Aorta (tissue), 5 donors: ENCODE measurements at regions of chr15 and their contacts with region 1.

Region 1: DNA sequence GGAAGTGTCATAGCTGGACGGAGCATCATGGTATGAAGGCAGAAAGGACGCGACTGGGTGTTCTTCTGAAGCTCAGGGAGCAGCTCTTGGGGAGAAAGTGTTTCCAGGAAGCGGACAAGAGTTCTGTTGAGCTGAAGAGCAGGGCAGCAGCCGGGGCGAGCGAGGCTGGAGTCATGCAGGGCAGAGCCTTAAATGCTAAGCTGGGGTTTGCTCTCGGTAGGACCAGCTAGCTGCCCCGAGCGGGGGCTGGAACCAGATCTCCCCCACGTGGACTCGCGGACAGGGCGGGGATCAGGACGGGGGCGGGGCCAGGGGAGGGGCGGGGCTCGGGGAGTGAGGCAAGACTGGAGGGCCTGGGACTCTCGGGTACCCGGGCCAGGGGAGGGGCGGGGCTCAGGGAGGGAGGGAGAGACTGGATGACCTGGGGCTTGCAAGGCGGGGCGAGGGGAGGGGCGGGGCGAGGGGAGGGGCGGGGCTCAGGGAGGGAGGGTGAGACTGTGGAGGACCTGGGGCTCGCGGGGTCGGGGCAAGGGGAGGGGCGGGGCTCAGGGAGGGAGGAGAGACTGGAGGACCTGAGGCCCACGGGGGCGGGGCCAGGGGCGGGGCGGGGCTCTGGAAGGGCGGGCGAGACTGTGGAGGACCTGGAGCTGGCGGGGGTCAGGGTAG is 486 bp upstream of the FAH start:
- DNase-seq: peak; percentile 98
- ATAC-seq: peak; percentile 94
- H3K4me3 ChIP-seq: peak overlapping the region; percentile 58 to 74
- H3K27ac ChIP-seq: no peak overlapping the region
- H3K4me1 ChIP-seq: peaks cover 0 to 3% of the 10 kb centered on the region in 2 donors
- H3K27me3 ChIP-seq: no peaks in the 10 kb centered on the region

Region 2: GRCh38 chr15:79702621-79703020 is 449.7 kb before region 1 on chr15:
- intact Hi-C with region 1: no loop called
- DNase-seq: no peak
- ATAC-seq: no peak
- H3K4me3 ChIP-seq: no peak overlapping the region
- H3K27ac ChIP-seq: no peak overlapping the region
- H3K4me1 ChIP-seq: no peaks in the 10 kb centered on the region
- H3K27me3 ChIP-seq: no peaks in the 10 kb centered on the region

Region 3: DNA sequence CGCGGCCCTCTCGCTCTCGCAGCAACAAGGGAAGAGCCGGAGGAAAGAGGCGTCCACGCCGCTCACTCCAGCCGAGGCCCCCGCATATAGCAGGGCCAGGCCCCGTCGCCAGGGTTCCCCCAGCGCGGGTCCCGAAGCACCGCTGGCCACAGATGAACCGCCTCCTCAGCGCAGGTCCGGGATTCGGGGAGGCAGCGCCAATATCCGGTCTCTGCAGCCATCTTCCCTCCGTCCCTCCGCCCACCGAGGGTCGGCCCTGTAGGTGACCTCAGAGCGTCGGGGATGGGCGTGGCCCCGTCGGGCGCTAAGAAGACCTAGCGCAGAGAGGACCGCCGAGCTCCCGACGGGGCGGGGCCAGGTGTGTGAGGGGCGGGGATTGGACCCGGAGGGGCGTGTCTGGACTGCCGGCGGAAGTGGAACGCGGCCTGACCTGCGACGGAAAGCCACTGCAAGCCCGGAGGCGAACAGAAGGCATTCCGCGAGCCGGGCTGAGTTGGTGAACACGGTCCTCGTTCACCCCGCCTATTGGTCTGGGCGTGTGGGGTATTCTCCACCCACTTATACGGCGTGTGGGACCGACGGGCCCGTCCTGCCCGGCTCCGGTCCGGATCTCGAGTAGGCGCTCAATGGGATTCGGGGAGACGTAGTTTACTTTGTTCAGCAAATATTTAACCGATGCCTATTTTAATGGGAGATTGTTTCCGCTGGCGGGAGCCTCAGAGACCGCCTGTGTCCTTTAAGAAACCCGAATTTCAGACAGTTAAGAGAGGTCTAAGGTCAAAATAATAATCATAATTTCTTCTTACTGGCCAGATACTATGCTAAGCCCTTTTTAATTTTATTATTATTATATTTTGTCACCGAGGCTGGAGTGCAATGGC is 228.6 kb before region 1 on chr15:
- intact Hi-C with region 1: loop called in 1 of 2 experiments (anchors 10 kb)
- DNase-seq: peak; percentile 95 to 97
- ATAC-seq: peak; percentile 99
- H3K4me3 ChIP-seq: peak overlapping the region; percentile 63 to 73
- H3K27ac ChIP-seq: peak overlapping the region; percentile 71 to 84
- H3K4me1 ChIP-seq: no peaks in the 10 kb centered on the region
- H3K27me3 ChIP-seq: no peaks in the 10 kb centered on the region

Region 4: GRCh38 chr15:80058851-80059785 is 93.2 kb before region 1 on chr15 and contains the start of gene ZFAND6:
- intact Hi-C with region 1: loop called (anchors 5 kb)
- DNase-seq: peak; percentile 97 to 98
- ATAC-seq: peak; percentile 99
- H3K4me3 ChIP-seq: peak within 1 kb of the TSS; percentile 92 to 98
- H3K27ac ChIP-seq: peak within 1 kb of the TSS; percentile 44 to 78
- H3K4me1 ChIP-seq: no peaks in the 10 kb centered on the region
- H3K27me3 ChIP-seq: no peaks in the 10 kb centered on the region
- total RNA-seq, gene ZFAND6: 61.2 to 73.7 TPM

Region 5: GRCh38 chr15:80173022-80173759 is 20.9 kb after region 1 on chr15:
- intact Hi-C with region 1: loop called in 1 of 2 experiments (anchors 2 kb)
- DNase-seq: peak in 1 of 2 donors; percentile 73
- ATAC-seq: peak; percentile 75
- H3K4me3 ChIP-seq: no peak overlapping the region
- H3K27ac ChIP-seq: peak overlapping the region; percentile 8 to 98
- H3K4me1 ChIP-seq: peaks cover 2 to 7% of the 10 kb centered on the region in 2 donors
- H3K27me3 ChIP-seq: no peaks in the 10 kb centered on the region

Region 6: DNA sequence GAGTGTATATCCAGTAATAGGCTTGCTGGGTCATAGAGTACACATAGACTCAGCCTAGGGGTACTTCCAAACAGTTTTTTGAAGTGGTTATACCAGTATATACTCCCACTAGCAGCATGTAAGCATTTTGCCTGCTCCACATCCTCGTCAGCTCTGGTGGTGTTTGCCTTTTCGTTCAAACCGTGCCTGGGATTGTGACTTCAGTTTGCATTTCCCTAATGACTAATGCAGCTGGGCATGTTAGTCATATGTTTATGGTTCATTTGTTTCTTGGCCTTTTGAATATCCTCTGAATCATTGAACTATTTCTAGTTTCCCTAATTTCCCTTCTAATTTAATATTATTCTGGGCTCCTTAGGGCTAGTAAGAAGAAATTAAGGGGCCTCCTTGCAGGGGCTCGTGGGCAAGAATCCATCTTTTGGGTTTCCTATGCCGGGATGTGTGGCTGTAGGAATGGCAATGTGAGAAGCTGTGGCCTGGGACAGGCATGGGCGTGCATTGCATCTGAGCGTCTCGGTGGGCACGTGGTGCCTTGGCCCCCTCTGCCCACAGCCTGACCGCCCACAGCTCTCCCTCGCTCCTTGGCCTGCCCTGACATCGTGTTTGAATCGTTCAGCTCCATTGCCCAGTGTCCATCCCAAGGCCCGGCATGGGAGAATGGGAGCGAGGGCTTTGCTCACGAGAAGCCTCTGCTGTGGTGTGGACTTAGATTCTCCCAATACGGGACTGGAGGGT is 26.9 kb after region 1 on chr15:
- intact Hi-C with region 1: loop called in 1 of 2 experiments (anchors 1 kb)
- DNase-seq: no peak
- ATAC-seq: peak; percentile 34
- H3K4me3 ChIP-seq: no peak overlapping the region
- H3K27ac ChIP-seq: peak overlapping the region; percentile 59 to 82
- H3K4me1 ChIP-seq: peaks cover 5 to 10% of the 10 kb centered on the region in 2 donors
- H3K27me3 ChIP-seq: no peaks in the 10 kb centered on the region

Region 7: GRCh38 chr15:80191897-80192595 is 39.7 kb after region 1 on chr15:
- intact Hi-C with region 1: no loop called
- DNase-seq: no peak
- ATAC-seq: no peak
- H3K4me3 ChIP-seq: no peak overlapping the region
- H3K27ac ChIP-seq: no peak overlapping the region
- H3K4me1 ChIP-seq: no peaks in the 10 kb centered on the region
- H3K27me3 ChIP-seq: no peaks in the 10 kb centered on the region